Astrocyte of the cerebellum (primary cell): ENCODE measurements at regions of chr11 and their contacts with region 1.

Region 1: GRCh38 chr11:2249189-2249916 is 21.0 kb downstream of the ASCL2 start:
- DNase-seq: no peak
- H3K4me3 ChIP-seq: no peak overlapping the region
- CTCF ChIP-seq: no peak

Region 2: DNA sequence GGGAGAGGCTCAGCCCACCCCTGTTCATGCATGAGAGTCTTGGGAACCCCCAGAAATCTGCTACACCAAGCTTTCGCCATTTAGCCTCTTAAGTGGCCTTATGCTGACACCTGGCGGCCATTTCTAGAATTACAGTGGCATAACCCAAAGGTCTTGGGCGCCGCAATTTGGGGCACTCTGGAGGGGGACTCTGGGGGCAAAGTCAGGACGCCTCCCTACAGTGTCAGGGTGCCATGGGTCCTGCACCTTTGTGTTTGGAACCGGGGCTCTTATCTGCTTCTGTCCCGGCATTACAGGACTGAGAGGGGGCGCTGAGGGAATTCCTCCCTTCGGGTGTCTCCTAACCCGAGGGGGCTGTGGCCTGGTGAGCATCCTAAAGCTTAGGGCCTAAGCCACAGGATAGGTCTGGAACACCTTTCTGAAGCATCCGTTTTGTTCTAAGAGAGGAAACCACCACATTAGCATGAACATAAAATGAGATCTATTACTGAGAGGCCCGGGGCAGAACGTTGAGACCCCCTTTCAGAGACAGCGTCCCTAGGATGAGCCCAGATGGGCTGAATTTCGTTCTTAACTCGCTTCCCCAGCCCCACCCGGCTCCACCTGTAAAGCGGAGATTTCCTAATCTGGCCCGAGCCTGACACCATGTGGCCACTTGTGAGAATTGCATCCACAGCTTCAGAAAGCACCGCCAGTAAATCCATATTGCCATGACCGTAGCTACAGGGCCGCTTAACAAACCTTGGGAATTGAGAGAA is 97.7 kb before region 1 on chr11:
- in situ Hi-C with region 1: no loop called
- DNase-seq: peak; percentile 53
- H3K4me3 ChIP-seq: no peak overlapping the region
- CTCF ChIP-seq: peak; percentile 77

Region 3: DNA sequence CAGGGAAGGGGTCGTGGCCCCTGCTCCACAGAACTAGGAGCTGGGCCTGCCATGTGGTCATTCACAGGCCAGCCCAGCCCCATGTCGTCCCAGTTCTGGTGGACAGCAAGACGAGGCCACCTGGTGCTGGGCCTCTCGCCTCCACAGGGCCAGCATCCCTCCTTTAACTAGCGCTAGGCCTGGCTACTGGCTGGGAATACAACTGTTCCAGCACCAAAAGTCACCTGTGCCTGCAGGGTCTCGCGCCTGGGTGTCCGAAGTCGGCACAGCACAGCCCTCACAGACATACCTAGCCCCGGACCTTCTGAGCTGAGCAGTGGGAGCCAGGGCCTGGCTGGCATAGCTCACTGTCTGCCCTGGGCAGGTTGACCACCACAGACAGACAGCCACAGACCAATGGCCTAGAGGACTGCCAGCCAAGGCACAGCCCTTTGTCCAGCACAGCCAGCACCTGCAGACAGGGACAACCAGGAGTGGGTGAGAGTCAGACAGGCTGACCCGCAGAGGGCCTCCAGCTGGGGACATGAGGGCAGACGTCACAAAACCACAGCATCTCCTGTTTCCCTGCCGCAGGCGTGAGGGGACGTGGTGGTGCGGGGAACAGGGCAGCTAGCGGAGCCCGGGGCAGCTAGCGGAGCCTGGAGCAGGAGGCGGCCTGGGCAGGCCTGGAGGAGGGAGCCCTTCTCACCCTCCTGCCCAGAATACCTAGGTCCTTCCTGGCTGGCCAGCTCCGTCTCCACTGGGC is 50.6 kb before region 1 on chr11:
- in situ Hi-C with region 1: no loop called
- DNase-seq: no peak
- H3K4me3 ChIP-seq: no peak overlapping the region
- CTCF ChIP-seq: no peak

Region 4: GRCh38 chr11:2211113-2211971 is 38.0 kb before region 1 on chr11:
- in situ Hi-C with region 1: loop called (anchors 5 kb)
- DNase-seq: no peak
- H3K4me3 ChIP-seq: no peak overlapping the region
- CTCF ChIP-seq: no peak

Region 5: DNA sequence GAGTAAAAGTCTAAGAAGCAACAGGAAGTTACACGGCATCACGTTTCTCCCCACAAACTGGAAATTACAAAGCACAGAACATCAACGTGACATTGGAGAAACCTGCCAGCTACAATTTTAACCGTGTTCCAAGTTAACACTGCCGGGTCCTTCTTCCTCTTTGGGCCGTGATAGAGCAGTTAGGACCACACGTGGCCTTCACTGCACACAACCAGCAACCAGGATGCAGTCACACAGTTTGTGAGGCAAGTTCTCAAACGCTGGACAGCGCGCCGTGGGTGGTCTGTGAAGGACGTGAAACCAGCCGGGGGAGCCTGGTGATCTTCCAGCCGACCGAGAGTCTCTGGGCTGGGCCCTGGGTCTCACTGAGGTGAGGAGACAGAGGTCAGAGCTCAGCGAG is 37.7 kb after region 1 on chr11:
- in situ Hi-C with region 1: no loop called
- DNase-seq: no peak
- H3K4me3 ChIP-seq: no peak overlapping the region
- CTCF ChIP-seq: no peak

Region 6: GRCh38 chr11:2420502-2421225 is 171.3 kb after region 1 on chr11:
- in situ Hi-C with region 1: no loop called
- DNase-seq: peak; percentile 26
- H3K4me3 ChIP-seq: no peak overlapping the region
- CTCF ChIP-seq: peak; percentile 86